ENCODE measurements at regions of chr4 and their contacts with region 1.

Region 1: GRCh38 chr4:156475322-156475721 is 496.3 kb downstream of the PDGFC start:
- DNase-seq: no peak
- H3K4me3 ChIP-seq: no peak overlapping the region
- H3K27ac ChIP-seq: no peak overlapping the region
- H3K4me1 ChIP-seq: no peaks in the 10 kb centered on the region
- H3K27me3 ChIP-seq: no peaks in the 10 kb centered on the region
- CTCF ChIP-seq: peak; percentile 69

Region 2: DNA sequence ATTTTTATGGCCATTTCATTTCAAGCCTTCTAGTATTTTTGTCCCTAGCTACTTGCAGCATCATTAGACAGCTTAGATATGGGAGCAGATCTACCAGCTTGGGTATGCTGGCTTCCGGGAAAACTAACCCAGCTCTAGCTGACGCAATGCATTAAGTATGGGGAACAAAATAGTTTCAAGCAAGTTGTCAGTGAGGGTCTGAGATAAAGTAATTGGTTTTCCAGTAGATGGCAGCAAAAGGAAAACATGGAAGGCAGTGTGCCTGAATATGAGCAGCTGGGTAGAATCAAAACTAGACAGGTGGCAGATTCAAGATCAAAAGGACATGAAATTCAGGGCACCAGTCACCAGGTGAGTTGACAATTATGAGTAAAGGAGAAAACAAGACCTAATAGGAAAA is 180.7 kb before region 1 on chr4:
- CTCF ChIA-PET with region 1: no interaction called
- POLR2A ChIA-PET with region 1: no interaction called
- intact Hi-C with region 1: loop called (anchors 1 kb)
- DNase-seq: peak; percentile 37 to 44
- H3K4me3 ChIP-seq: no peak overlapping the region
- H3K27ac ChIP-seq: no peak overlapping the region
- H3K4me1 ChIP-seq: no peaks in the 10 kb centered on the region
- H3K27me3 ChIP-seq: no peaks in the 10 kb centered on the region
- CTCF ChIP-seq: no peak

Region 3: GRCh38 chr4:156329779-156330178 is 145.5 kb before region 1 on chr4:
- CTCF ChIA-PET with region 1: no interaction called
- POLR2A ChIA-PET with region 1: no interaction called
- intact Hi-C with region 1: no loop called
- DNase-seq: no peak
- H3K4me3 ChIP-seq: no peak overlapping the region
- H3K27ac ChIP-seq: no peak overlapping the region
- H3K4me1 ChIP-seq: no peaks in the 10 kb centered on the region
- H3K27me3 ChIP-seq: no peaks in the 10 kb centered on the region
- CTCF ChIP-seq: no peak

Region 4: GRCh38 chr4:156456830-156457229 is 18.5 kb before region 1 on chr4:
- CTCF ChIA-PET with region 1: no interaction called
- POLR2A ChIA-PET with region 1: no interaction called
- intact Hi-C with region 1: no loop called
- DNase-seq: no peak
- H3K4me3 ChIP-seq: no peak overlapping the region
- H3K27ac ChIP-seq: no peak overlapping the region
- H3K4me1 ChIP-seq: no peaks in the 10 kb centered on the region
- H3K27me3 ChIP-seq: no peaks in the 10 kb centered on the region
- CTCF ChIP-seq: no peak

Region 5: GRCh38 chr4:156771171-156771837 is 296.0 kb after region 1 on chr4:
- CTCF ChIA-PET with region 1: interaction called, 3 read pairs
- POLR2A ChIA-PET with region 1: no interaction called
- intact Hi-C with region 1: loop called (anchors 5 kb)
- DNase-seq: peak in 1 of 2 experiments; percentile 58
- H3K4me3 ChIP-seq: no peak overlapping the region
- H3K27ac ChIP-seq: no peak overlapping the region
- H3K4me1 ChIP-seq: no peaks in the 10 kb centered on the region
- H3K27me3 ChIP-seq: no peaks in the 10 kb centered on the region
- CTCF ChIP-seq: no peak

Region 6: DNA sequence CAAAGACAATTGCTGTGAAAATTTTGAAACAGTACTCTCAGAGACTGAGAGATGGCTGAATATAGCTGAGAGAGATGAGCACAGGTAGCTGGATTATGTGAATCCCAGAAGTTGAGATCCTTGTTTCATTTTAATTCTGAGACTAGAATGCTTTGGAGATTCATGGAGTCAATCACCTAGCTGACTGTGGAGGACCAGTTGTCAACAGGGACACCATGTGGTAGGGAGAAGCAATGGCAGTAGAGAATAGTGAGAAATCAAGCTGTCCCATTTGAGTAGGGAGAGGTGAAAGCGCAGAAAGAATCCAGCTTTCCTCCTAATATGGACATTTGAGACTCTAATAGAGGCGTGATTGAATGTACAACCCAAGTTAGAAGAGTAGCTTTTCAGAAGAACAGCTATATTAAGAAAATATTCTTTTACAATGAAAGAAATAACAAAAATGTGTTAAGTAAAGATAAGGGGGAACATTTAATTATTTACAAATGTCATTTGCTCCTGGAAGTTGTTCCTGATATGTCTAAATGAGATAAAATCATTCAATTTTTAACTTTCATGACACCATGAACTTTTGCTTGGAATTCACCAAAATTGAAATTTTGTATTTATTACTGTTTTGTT is 570.3 kb after region 1 on chr4:
- CTCF ChIA-PET with region 1: interaction called, 8 read pairs
- POLR2A ChIA-PET with region 1: no interaction called
- intact Hi-C with region 1: loop called (anchors 1 kb)
- DNase-seq: peak; percentile 25 to 52
- H3K4me3 ChIP-seq: no peak overlapping the region
- H3K27ac ChIP-seq: no peak overlapping the region
- H3K4me1 ChIP-seq: no peaks in the 10 kb centered on the region
- H3K27me3 ChIP-seq: no peaks in the 10 kb centered on the region
- CTCF ChIP-seq: peak; percentile 70

Region 7: GRCh38 chr4:157172011-157172410 is 696.7 kb after region 1 on chr4:
- CTCF ChIA-PET with region 1: no interaction called
- POLR2A ChIA-PET with region 1: no interaction called
- intact Hi-C with region 1: loop called (anchors 1 kb)
- DNase-seq: no peak
- H3K4me3 ChIP-seq: no peak overlapping the region
- H3K27ac ChIP-seq: no peak overlapping the region
- H3K4me1 ChIP-seq: no peaks in the 10 kb centered on the region
- H3K27me3 ChIP-seq: no peaks in the 10 kb centered on the region
- CTCF ChIP-seq: peak; percentile 51; the same call in 1 of the 2 replicates

Region 8: GRCh38 chr4:157564771-157565170 is 1089.4 kb after region 1 on chr4:
- CTCF ChIA-PET with region 1: interaction called, 11 read pairs
- POLR2A ChIA-PET with region 1: no interaction called
- intact Hi-C with region 1: no loop called
- DNase-seq: no peak
- H3K4me3 ChIP-seq: no peak overlapping the region
- H3K27ac ChIP-seq: no peak overlapping the region
- H3K4me1 ChIP-seq: no peaks in the 10 kb centered on the region
- H3K27me3 ChIP-seq: no peaks in the 10 kb centered on the region
- CTCF ChIP-seq: no peak